Activated CD4-positive, alpha-beta T cell treated with anti-CD3 and anti-CD28 coated beads, Interleukin-2, amount 10 ng/mL, durations not matched to agents 7 days and 5 days (primary cell): ENCODE measurements at regions of chr12 and their contacts with region 1.

Region 1: GRCh38 chr12:54294152-54294952 is 6.5 kb downstream of the NFE2 start:
- DNase-seq: peak; percentile 72
- H3K4me3 Mint-ChIP-seq: no peak overlapping the region
- H3K27ac Mint-ChIP-seq: no peak overlapping the region
- H3K4me1 Mint-ChIP-seq: peaks cover 9% of the 10 kb centered on the region
- H3K27me3 Mint-ChIP-seq: peaks cover 15% of the 10 kb centered on the region

Region 2: DNA sequence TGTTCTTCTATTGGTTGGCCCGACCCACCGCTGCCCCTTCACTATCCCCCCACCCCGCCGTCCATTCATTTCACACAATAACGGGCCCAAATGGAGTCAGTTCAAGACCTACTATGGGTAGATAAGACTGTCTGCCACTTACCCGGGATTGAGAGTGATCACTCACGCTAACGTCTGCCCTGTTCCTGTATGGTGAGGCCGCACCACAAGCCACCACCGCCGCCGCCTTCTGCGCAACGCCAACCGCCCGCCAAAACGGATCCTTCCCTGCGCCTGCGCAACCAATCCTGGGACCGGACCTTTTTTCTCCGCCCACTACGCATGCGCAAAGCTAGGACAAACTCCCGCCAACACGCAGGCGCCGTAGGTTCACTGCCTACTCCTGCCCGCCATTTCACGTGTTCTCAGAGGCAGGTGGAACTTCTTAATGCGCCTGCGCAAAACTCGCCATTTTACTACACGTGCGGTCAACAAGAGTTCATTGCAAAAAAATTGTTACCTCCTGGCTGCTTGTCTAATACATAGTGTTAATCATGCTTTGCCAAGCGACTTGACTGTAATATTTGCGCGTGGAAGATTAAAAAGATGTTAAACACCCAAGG is 14.4 kb before region 1 on chr12 and contains the start of gene CBX5:
- CTCF ChIA-PET with region 1: interaction called, 14 read pairs
- POLR2A ChIA-PET with region 1: interaction called, 3 read pairs
- DNase-seq: peak; percentile 100
- H3K4me3 Mint-ChIP-seq: no peak within 1 kb of the TSS
- H3K27ac Mint-ChIP-seq: no peak within 1 kb of the TSS
- H3K4me1 Mint-ChIP-seq: peaks cover 58% of the 10 kb centered on the region
- H3K27me3 Mint-ChIP-seq: no peaks in the 10 kb centered on the region
- total RNA-seq, gene CBX5: 145 to 170 TPM